CD8-positive, alpha-beta T cell (primary cell): ENCODE measurements at regions of chr2 and their contacts with region 1.

Region 1: GRCh38 chr2:233611284-233611683 is 6.1 kb upstream of the UGT1A8 start:
- DNase-seq: no peak
- ATAC-seq: no peak
- H3K4me3 ChIP-seq: no peak overlapping the region
- H3K4me3 Mint-ChIP-seq: no peak overlapping the region
- H3K27ac ChIP-seq: no peak overlapping the region
- H3K27ac Mint-ChIP-seq: no peak overlapping the region
- H3K4me1 ChIP-seq: no peaks in the 10 kb centered on the region
- H3K4me1 Mint-ChIP-seq: no peaks in the 10 kb centered on the region
- H3K27me3 ChIP-seq: no peaks in the 10 kb centered on the region
- H3K27me3 Mint-ChIP-seq: peaks cover 30% of the 10 kb centered on the region
- CTCF ChIP-seq: no peak

Region 2: DNA sequence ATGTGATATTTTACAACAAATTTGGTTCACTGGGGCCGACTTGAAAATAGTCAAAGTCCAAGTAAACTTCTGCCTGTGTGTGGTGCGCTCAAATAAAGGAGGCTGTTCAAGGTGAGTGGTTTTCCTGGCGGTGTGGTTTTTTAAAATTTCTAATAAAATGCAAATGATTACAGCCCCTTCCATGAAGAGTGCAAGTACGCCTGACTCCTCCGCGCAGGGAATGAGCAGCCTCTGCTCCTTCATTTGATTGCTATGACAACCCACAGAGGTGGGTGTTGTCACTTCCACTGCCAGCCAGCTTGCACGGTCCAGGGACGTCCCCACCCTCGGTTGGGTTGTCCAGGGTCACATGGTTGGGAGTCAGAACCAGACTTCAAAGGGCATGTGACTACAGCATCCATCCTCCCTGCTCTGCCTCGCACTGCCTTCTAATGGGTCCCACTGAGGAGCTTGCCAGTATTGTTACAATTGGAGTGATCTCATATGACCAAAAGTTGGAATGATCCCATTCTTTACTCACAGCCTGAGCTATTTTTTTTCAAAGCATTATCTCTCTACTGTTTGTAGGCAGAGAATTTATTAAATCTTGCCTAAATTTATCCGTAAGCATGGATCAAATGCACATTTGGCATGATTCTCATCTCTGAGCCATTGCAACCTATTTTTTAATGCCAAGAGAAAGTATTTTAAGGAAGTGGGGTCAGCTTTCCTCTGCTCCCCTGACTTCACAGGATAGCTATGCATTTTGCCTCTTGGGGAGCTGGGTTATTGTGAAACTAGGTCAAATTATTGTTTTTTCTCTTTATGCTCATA is 2003.8 kb after region 1 on chr2:
- CTCF ChIA-PET with region 1: no interaction called
- POLR2A ChIA-PET with region 1: no interaction called
- intact Hi-C with region 1: loop called in 1 of 2 experiments (anchors 10 kb)
- DNase-seq: no peak
- ATAC-seq: no peak
- H3K4me3 ChIP-seq: no peak overlapping the region
- H3K4me3 Mint-ChIP-seq: no peak overlapping the region
- H3K27ac ChIP-seq: no peak overlapping the region
- H3K27ac Mint-ChIP-seq: no peak overlapping the region
- H3K4me1 ChIP-seq: no peaks in the 10 kb centered on the region
- H3K4me1 Mint-ChIP-seq: peaks cover 8% of the 10 kb centered on the region
- H3K27me3 ChIP-seq: no peaks in the 10 kb centered on the region
- H3K27me3 Mint-ChIP-seq: peaks cover 8% of the 10 kb centered on the region
- CTCF ChIP-seq: no peak